PC-9 (cell line): ENCODE measurements at regions of chr11 and their contacts with region 1.

Region 1: GRCh38 chr11:16785520-16786128 is 47.2 kb downstream of the C11orf58 start:
- DNase-seq: peak; percentile 43 to 49
- H3K4me3 ChIP-seq: no peak overlapping the region
- H3K27ac ChIP-seq: no peak overlapping the region
- H3K4me1 ChIP-seq: peaks cover 35% of the 10 kb centered on the region
- H3K27me3 ChIP-seq: no peaks in the 10 kb centered on the region
- CTCF ChIP-seq: peak; percentile 74

Region 2: DNA sequence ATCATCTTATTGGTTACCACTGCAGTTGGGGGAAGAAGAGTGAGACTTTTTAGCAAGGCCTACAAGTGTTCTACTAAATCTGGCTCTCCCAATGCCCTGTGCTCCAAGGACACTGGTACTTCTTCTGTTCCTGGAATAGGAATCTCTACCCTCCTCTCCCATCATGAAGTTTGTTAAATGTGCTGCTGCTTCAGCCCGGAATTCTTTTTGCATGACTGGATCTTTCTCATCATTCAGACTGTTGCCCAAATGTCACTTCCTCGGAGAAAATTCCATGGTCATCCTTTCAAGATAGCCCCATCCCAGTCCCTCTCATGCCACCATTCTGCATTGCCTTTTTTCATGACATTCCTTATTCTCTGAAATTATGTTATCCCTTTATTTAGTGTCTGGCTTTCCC is 830.0 kb before region 1 on chr11:
- CTCF ChIA-PET with region 1: no interaction called
- POLR2A ChIA-PET with region 1: no interaction called
- intact Hi-C with region 1: no loop called
- DNase-seq: no peak
- H3K4me3 ChIP-seq: no peak overlapping the region
- H3K27ac ChIP-seq: no peak overlapping the region
- H3K4me1 ChIP-seq: no peaks in the 10 kb centered on the region
- H3K27me3 ChIP-seq: no peaks in the 10 kb centered on the region
- CTCF ChIP-seq: no peak

Region 3: DNA sequence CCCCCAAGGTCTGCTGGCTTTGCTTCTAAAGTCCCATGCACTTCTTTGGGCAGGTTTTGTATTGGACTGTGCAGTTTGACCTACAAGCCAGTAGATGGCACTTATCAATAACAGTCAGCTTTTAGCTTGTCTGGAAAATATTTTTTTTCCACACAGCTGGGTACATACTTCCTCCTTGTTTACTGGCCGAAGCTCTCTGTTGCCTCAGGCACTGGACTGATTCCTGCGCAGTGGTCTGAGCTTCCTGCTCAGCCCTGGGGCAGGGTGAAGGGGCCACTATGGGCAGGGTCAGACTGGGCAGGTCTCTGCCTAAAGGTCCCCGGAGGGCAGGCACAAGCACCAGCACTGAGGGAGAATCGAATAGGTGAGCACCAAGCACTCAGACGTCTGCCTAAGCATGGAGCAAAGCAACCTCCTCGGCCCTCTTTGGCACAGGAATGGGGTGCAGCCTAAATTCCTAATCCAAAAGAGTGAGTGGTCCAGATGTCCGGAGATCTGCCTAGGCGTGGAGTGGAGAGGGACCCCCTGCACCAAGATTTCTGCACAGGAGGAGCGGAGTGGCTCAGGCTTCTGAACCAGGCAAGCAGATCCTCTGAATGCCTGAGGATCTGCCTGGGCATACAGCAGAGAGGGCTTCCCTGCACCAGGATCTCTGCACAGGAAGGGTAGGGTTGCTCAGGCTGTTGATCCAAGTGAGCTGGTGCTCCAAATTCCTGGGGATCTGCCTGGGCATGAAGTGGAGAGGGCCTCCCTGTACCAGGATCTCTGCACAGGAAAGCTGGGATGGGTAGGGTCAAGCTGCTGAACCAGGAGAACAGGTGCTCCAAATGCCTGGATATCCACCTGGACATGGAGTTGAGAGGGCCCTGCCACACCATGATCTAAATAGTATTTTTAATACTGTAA is 153.1 kb before region 1 on chr11:
- CTCF ChIA-PET with region 1: no interaction called
- POLR2A ChIA-PET with region 1: no interaction called
- intact Hi-C with region 1: loop called (anchors 2 kb)
- DNase-seq: peak; percentile 28 to 73
- H3K4me3 ChIP-seq: no peak overlapping the region
- H3K27ac ChIP-seq: no peak overlapping the region
- H3K4me1 ChIP-seq: peaks cover 6% of the 10 kb centered on the region; the same call in 1 of the 2 replicates
- H3K27me3 ChIP-seq: no peaks in the 10 kb centered on the region
- CTCF ChIP-seq: peak; percentile 67

Region 4: GRCh38 chr11:16881074-16881709 is 95.6 kb after region 1 on chr11:
- CTCF ChIA-PET with region 1: no interaction called
- POLR2A ChIA-PET with region 1: no interaction called
- intact Hi-C with region 1: loop called (anchors 1 kb)
- DNase-seq: peak; percentile 53 to 54
- H3K4me3 ChIP-seq: no peak overlapping the region
- H3K27ac ChIP-seq: peak overlapping the region; percentile 23; the same call in 1 of the 2 replicates
- H3K4me1 ChIP-seq: peaks cover 37% of the 10 kb centered on the region
- H3K27me3 ChIP-seq: no peaks in the 10 kb centered on the region
- CTCF ChIP-seq: peak; percentile 23; the same call in 1 of the 2 replicates

Region 5: DNA sequence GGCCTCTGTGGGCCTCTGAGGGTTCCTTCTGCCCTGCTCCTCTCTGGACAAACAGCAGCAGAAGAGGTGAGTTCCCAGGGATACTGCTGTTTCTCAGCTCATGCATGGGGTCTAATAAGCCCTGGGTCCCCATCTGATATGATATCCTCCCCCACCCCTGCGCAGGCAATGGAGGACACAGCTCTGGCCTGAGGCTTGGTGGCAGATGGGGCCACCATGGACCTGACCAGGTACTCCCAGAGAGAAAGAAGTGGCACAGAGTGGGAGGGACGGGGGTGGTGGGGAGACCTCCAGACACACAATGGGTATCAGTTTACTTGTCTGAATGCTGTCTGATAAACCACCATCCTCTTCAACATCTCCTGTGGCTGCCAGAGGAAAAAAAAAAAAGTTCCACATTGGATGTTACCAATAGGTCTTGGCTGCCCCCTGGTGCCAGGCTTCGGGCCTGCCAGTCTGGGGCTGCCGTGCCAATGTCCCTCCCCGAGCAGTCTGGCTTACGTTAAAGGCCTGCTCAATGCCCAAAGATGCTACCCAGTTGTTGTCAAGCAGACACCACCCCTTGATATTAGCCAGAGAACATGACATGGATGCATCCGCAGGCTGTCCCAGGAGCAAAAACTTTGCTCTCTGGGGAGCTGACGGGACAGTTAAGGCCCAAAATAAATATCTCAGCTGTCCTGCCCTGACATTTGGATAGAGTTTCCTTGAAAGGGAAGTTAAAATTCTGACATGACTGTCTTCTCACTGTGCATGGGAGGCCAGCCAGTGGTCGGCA is 718.9 kb after region 1 on chr11:
- CTCF ChIA-PET with region 1: no interaction called
- POLR2A ChIA-PET with region 1: no interaction called
- intact Hi-C with region 1: loop called (anchors 10 kb)
- DNase-seq: peak; percentile 53 to 79
- H3K4me3 ChIP-seq: no peak overlapping the region
- H3K27ac ChIP-seq: no peak overlapping the region
- H3K4me1 ChIP-seq: no peaks in the 10 kb centered on the region
- H3K27me3 ChIP-seq: peaks cover 58% of the 10 kb centered on the region
- CTCF ChIP-seq: peak; percentile 92